GM13977 (cell line): ENCODE measurements at regions of chr15 and their contacts with region 1.

Region 1: GRCh38 chr15:71011503-71012155 is 103.6 kb upstream of the THSD4 start:
- DNase-seq: no peak
- CTCF ChIP-seq: peak; percentile 62

Region 2: GRCh38 chr15:71411538-71412482 is 400.2 kb after region 1 on chr15:
- in situ Hi-C with region 1: loop called (anchors 25 kb)
- DNase-seq: no peak
- CTCF ChIP-seq: no peak